Gastrocnemius medialis (tissue), 4 donors: ENCODE measurements at regions of chr17 and their contacts with region 1.

Region 1: DNA sequence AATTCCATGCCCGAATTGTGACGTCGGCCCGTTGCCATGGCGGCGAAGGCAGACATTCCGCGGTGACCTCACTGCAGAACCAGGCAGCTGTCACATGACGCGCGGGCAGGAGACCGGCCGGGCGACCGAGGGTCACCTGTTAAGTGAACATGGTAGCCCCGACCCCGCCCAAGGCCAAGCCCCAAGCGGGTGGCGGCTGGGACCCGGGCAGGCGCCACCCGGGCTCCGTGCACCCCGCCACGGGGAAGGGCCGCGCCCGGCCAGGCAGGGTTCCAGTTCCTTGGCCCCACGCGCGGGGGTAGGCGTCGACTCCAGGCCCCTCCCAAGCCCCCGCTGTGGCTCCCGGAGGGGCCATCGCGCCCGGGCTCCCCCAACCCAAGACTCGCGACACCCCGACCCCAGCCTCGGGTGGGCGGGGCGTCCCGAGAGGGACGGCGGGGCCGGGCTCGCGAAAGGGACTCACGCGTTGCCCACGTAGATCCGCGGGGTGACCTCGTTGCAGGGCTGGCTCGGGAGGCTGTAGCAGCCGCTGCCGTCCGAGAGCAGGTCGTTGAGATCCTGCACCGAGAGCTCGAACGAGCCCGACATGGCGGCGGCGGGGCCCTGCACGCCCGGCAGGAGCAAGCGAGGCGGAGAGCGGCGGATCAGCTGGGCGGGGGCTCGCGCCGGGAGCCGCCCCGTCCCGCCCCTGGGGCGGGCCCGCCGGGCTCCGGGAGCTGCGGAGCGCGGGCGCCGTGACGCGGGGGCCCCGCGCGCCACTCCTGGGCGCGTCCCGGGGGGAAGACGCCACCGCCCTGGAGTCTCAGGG is at the start of gene DUSP3:
- DNase-seq: peak; percentile 96 to 98
- ATAC-seq: peak; percentile 67 to 81
- H3K4me3 ChIP-seq: peak within 1 kb of the TSS; percentile 77 to 100 (median 92)
- H3K27ac ChIP-seq: peak within 1 kb of the TSS; percentile 98 to 100 (median 100)
- H3K4me1 ChIP-seq: peaks cover 47 to 49% of the 10 kb centered on the region in 2 donors
- H3K27me3 ChIP-seq: no peaks in the 10 kb centered on the region
- CTCF ChIP-seq: no peak
- POLR2A ChIP-seq: peak; percentile 93 to 97
- total RNA-seq, gene DUSP3: 121 to 184 (median 145) TPM

Region 2: GRCh38 chr17:42980398-42981397 is 797.8 kb before region 1 on chr17 and contains the start of gene RUNDC1:
- in situ Hi-C with region 1: no loop called
- intact Hi-C with region 1: loop called (anchors 10 kb)
- DNase-seq: peak; percentile 79 to 87
- ATAC-seq: peak; percentile 76 to 82
- H3K4me3 ChIP-seq: peak within 1 kb of the TSS; percentile 78 to 91 (median 86)
- H3K27ac ChIP-seq: peak within 1 kb of the TSS; percentile 96 to 98 (median 98)
- H3K4me1 ChIP-seq: peaks cover 12 to 23% of the 10 kb centered on the region in 2 donors
- H3K27me3 ChIP-seq: no peaks in the 10 kb centered on the region
- CTCF ChIP-seq: peak in 4 of 5 experiments; percentile 13 to 33 (median 26)
- POLR2A ChIP-seq: peak; percentile 27 to 41
- total RNA-seq, gene RUNDC1: 13.8 to 19.8 (median 16.4) TPM

Region 3: DNA sequence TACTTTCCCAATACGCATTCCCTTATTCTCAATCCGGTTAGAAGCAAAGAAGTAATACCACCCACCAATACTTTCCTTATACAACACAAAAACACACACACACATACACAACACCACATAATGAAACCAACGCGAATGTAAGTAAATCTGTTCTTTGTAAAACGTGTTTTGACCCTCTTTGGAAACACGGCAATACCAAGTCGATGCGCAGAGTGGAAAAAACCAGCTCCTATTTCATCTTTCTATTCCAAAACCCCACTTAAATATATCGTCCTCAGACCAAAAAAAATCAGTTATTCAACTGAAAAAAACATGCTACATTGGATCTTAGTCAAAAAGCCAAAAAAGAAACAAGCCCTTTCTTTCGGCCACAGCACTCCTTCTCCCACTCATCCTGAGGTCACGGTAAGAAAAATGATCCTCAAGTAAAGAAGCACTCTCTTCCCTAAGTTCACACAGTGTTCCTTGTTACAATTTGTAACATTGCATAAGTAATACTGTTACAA is 410.8 kb before region 1 on chr17:
- in situ Hi-C with region 1: no loop called
- intact Hi-C with region 1: loop called (anchors 5 kb)
- DNase-seq: no peak
- ATAC-seq: peak; percentile 18 to 25
- H3K4me3 ChIP-seq: peak overlapping the region; percentile 59 to 78 (median 66)
- H3K27ac ChIP-seq: peak overlapping the region; percentile 95 to 100 (median 97)
- H3K4me1 ChIP-seq: peaks cover 15 to 24% of the 10 kb centered on the region in 2 donors
- H3K27me3 ChIP-seq: no peaks in the 10 kb centered on the region
- CTCF ChIP-seq: no peak
- POLR2A ChIP-seq: no peak

Region 4: GRCh38 chr17:43846221-43846712 is 67.7 kb after region 1 on chr17:
- in situ Hi-C with region 1: loop called in 1 of 4 experiments (anchors 10 kb)
- intact Hi-C with region 1: loop called (anchors 1 kb)
- DNase-seq: peak; percentile 67 to 79
- ATAC-seq: peak; percentile 73 to 86
- H3K4me3 ChIP-seq: peak overlapping the region in 2 of 4 donors; percentile 12 to 47
- H3K27ac ChIP-seq: peak overlapping the region; percentile 5 to 64 (median 48)
- H3K4me1 ChIP-seq: peaks cover 10% of the 10 kb centered on the region in 2 donors
- H3K27me3 ChIP-seq: peaks cover 0 to 3% (median 0%) of the 10 kb centered on the region in 3 donors
- CTCF ChIP-seq: peak; percentile 93 to 99 (median 94)
- POLR2A ChIP-seq: no peak

Region 5: DNA sequence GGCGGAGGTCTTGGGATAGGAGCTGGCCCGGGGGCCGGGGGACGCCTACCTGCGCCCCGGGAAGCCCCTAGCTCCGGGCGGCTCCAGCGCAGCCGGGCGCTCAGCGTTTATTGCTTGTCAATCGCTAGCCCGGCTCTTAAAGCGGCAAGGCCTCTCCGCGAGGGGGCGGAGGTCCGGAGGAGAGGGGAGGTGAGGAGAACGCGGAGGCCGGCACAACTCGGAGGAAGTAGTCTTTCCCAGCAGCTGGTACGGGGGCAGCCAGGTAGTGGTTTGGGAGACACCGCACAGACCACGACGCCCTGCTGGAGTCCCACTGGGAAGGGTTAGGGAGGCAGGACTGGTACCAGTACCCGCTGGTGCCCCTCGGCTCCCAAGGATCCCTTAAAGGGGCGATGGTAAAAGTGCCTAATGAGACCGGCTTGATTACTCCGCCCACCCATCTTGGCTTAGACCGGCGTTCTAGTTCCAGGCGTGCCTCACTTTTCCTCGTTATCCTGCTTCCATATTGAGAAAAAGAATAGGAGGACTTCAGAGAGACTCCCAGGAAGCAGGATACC is 129.0 kb after region 1 on chr17 and contains the start of gene MPP2:
- in situ Hi-C with region 1: no loop called
- intact Hi-C with region 1: no loop called
- DNase-seq: peak in 1 of 2 donors; percentile 33
- ATAC-seq: peak; percentile 46 to 53
- H3K4me3 ChIP-seq: peak within 1 kb of the TSS; percentile 51 to 78 (median 66)
- H3K27ac ChIP-seq: peak within 1 kb of the TSS; percentile 61 to 77 (median 74)
- H3K4me1 ChIP-seq: peaks cover 10 to 29% of the 10 kb centered on the region in 2 donors
- H3K27me3 ChIP-seq: peaks cover 39 to 50% (median 50%) of the 10 kb centered on the region in 3 donors
- CTCF ChIP-seq: peak in 3 of 5 experiments; percentile 12 to 49 (median 41)
- POLR2A ChIP-seq: peak in 1 of 2 donors; percentile 40
- total RNA-seq, gene MPP2: 0.39 to 3.2 (median 2.0) TPM in 3 of 4 donors, not detected in the other

Region 6: GRCh38 chr17:44110823-44111633 is 332.5 kb after region 1 on chr17:
- in situ Hi-C with region 1: no loop called
- intact Hi-C with region 1: loop called (anchors 10 kb)
- DNase-seq: peak; percentile 98 to 99
- ATAC-seq: peak; percentile 43 to 62
- H3K4me3 ChIP-seq: peak overlapping the region; percentile 29 to 76 (median 67)
- H3K27ac ChIP-seq: peak overlapping the region; percentile 92 to 94 (median 94)
- H3K4me1 ChIP-seq: peaks cover 94 to 97% of the 10 kb centered on the region in 2 donors
- H3K27me3 ChIP-seq: no peaks in the 10 kb centered on the region
- CTCF ChIP-seq: peak in 2 of 5 experiments; percentile 23 to 36
- POLR2A ChIP-seq: peak; percentile 98 to 99

Region 7: GRCh38 chr17:45293413-45294211 is 1515.1 kb after region 1 on chr17:
- in situ Hi-C with region 1: no loop called
- intact Hi-C with region 1: loop called (anchors 10 kb)
- DNase-seq: peak; percentile 97 to 99
- ATAC-seq: peak; percentile 79 to 81
- H3K4me3 ChIP-seq: peak overlapping the region in 1 of 4 donors; percentile 11
- H3K27ac ChIP-seq: peak overlapping the region; percentile 88 to 98 (median 94)
- H3K4me1 ChIP-seq: peaks cover 99 to 100% of the 10 kb centered on the region in 2 donors
- H3K27me3 ChIP-seq: no peaks in the 10 kb centered on the region
- CTCF ChIP-seq: no peak
- POLR2A ChIP-seq: peak; percentile 24 to 49